HEK293 (cell line): ENCODE measurements at regions of chr11 and their contacts with region 1.

Region 1: GRCh38 chr11:30917859-30918478 is 331.8 kb upstream of the MPPED2 start:
- H3K4me3 ChIP-seq: no peak overlapping the region
- H3K27ac ChIP-seq: no peak overlapping the region
- H3K4me1 ChIP-seq: no peaks in the 10 kb centered on the region
- CTCF ChIP-seq: no peak

Region 2: DNA sequence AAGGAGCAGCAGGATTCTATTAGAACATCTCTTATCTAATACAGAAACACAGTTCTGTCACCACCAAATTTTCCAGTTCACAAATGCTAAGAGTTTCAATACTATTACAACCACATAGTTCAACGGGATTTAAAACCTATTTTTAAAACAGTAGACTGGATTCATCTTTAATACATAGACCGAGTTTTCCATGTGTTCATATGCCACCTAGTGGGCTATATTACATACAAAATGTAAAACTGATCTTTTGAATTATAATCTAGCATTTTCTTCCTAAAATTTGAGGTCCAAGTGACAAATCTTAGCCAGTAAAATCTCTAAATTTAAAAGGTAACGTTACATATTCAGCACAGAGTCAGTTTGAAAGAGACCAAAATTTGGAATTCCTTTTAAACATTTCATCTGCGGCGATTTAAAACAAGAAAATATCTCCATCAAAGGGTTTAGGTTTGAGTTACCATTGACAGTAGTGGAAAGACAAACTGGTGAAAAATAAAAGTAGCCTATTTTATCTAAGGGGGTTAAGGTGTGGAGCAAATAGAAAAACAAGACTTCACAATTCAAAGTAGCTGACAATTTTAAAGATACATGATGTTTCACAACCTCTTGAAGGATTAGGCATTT is 62.5 kb before region 1 on chr11:
- CTCF ChIA-PET with region 1: interaction called, 10 read pairs
- POLR2A ChIA-PET with region 1: no interaction called
- H3K4me3 ChIP-seq: no peak overlapping the region
- H3K27ac ChIP-seq: no peak overlapping the region
- H3K4me1 ChIP-seq: no peaks in the 10 kb centered on the region
- CTCF ChIP-seq: no peak

Region 3: DNA sequence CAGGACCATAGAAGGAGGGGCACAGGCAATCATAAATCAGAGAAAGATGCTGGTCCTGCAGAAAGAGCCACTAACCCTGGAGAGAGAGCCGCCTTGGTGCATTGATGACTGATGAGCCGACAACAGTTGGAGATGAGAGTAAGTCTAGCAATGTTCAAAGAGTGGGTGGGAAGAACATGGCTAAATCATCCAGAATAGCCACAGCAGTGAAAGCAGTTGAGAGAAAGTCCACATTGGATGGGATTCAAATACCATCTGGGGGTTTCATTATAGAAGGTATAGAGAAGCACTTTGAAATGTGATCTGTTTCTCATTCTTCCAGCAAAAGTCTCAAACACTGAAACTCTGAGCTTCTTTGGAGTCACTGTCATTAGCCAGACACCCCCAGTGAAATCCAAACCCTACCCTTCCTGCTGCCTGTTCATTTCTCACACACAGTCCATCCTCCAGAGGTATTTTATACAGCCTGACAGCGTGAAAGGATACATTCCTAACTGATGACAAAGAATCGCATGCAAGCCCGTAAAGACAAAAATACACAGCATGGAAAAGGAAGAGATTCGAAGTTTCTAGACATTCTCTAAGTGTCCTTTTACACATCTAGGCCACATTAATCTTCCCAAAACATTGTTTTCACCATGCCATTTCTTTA is 28.7 kb before region 1 on chr11:
- CTCF ChIA-PET with region 1: interaction called, 10 read pairs
- POLR2A ChIA-PET with region 1: no interaction called
- H3K4me3 ChIP-seq: no peak overlapping the region
- H3K27ac ChIP-seq: no peak overlapping the region
- H3K4me1 ChIP-seq: no peaks in the 10 kb centered on the region
- CTCF ChIP-seq: no peak

Region 4: GRCh38 chr11:30934488-30934887 is 16.5 kb after region 1 on chr11:
- CTCF ChIA-PET with region 1: no interaction called
- POLR2A ChIA-PET with region 1: no interaction called
- H3K4me3 ChIP-seq: no peak overlapping the region
- H3K27ac ChIP-seq: no peak overlapping the region
- H3K4me1 ChIP-seq: no peaks in the 10 kb centered on the region
- CTCF ChIP-seq: no peak

Region 5: DNA sequence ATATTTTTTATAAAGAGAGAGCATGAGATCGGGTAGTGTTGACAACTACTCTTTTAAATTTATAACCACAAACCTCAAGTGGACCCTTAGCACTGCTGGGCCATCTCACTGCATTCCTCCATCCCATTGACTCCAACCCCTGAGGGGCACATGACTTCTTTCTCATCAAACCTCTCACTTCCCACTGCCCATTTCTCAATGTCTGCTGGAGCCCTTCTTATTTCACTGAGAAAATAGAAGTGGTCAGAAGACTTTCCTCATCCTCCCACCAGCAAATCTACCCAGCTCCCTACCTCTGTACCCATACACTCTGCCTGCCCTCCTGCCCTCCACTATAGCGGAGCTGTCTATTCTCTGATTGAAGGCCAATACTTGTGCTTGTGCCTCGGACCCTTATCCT is 38.8 kb after region 1 on chr11:
- CTCF ChIA-PET with region 1: no interaction called
- POLR2A ChIA-PET with region 1: no interaction called
- H3K4me3 ChIP-seq: no peak overlapping the region
- H3K27ac ChIP-seq: no peak overlapping the region
- H3K4me1 ChIP-seq: no peaks in the 10 kb centered on the region
- CTCF ChIP-seq: no peak

Region 6: DNA sequence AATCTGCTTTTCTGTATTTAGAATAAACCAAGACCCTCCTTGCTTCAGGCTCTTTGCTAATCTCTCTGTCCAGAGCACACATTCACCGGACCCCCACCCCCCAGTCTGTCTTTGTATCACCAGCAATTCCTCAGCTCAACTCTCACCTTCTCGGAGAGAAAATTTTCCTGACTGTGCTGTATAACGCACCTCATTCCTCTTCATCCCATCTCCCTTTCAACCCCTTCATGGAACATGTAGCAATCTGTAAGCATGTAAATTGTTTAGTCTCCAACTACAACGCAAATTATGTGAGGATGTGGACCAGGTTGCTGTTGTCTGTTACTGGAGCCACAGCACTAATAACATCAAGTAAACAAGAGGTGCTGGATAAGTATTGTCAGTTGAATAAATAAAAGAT is 101.8 kb after region 1 on chr11:
- CTCF ChIA-PET with region 1: no interaction called
- POLR2A ChIA-PET with region 1: no interaction called
- H3K4me3 ChIP-seq: no peak overlapping the region
- H3K27ac ChIP-seq: no peak overlapping the region
- H3K4me1 ChIP-seq: no peaks in the 10 kb centered on the region
- CTCF ChIP-seq: no peak